Right cardiac atrium (tissue), 5 donors: ENCODE measurements at regions of chr1 and their contacts with region 1.

Region 1: GRCh38 chr1:244272471-244273261 is 179.0 kb downstream of the ADSS2 start:
- DNase-seq: peak; percentile 48 to 78 (median 66)
- ATAC-seq: peak; percentile 84 to 88
- H3K4me3 ChIP-seq: no peak overlapping the region
- H3K27ac ChIP-seq: peak overlapping the region; percentile 12
- H3K4me1 ChIP-seq: no peaks in the 10 kb centered on the region
- H3K27me3 ChIP-seq: no peaks in the 10 kb centered on the region

Region 2: DNA sequence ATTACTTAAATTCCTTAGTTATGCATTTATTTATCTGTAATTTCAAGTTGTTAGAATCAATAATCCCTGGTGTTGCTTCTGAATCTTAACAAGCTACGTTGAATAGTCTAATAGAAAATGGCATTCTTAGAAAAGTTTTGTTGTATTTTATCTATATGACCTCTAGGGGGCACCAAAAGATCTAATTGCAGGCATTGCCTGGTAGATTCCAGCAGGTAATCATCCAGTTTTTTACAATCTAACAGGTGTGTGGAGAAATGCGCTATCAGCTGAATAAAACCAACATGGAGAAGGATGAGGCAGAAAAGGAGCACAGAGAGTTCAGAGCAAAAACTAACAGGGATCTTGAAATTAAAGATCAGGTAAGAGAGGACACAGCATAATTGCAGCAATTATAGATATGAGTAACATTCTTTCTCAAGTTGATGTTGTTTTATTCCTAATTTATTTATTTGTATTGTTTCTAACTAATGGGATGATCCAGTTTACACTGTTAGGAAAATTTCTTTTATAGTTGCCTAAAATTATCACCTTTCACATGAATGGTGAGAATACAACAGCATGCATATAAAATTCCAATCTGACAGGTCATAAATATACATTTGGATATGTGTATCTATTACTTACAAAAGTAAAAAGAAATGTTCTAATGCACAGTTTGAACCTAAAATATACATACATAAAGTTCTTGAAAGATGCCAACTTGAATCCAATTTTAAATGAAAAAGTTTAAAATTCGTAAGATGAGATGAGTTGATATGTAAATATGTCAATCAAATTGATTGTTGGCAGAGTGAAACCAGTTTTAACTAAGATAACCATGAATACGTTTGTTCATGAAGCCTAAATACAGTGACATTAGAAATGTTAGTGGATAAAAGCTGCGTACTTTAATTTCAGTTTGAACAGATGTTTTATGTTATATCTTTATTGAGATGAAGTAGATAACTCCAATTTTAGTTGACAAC is 928.4 kb before region 1 on chr1:
- intact Hi-C with region 1: loop called in 3 of 4 experiments (anchors 5 to 10 kb)
- DNase-seq: no peak
- ATAC-seq: no peak
- H3K4me3 ChIP-seq: no peak overlapping the region
- H3K27ac ChIP-seq: no peak overlapping the region
- H3K4me1 ChIP-seq: no peaks in the 10 kb centered on the region
- H3K27me3 ChIP-seq: no peaks in the 10 kb centered on the region

Region 3: DNA sequence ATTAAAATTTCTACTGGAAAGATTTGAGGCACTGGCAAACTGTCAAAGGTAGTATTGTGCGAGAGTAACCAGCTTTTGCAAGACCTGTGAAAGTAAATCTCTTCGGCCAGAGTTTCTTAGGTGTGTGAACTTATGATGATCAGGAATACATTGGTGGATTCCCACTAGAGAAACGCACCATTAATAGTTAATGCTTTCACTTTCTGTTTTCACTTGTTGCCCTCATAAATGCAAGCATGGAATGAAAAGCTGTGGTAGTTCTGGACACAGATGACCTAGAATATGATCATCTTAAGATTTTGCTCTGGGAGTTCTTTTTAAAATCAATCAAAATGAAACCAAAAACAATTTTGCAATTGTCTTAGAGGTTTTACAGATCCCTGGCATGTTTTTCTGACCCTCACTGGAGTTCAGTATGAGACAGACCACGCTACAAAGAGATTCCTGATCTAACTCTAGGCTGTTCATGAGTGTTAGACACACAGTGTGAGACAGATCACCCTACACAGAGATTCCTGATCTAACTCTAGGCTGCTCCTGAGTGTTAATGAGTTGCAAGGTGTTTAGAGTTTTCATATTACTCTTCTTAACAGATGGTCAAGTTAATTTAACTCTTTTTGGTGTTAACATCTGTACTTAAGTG is 918.0 kb before region 1 on chr1:
- intact Hi-C with region 1: loop called (anchors 5 to 10 kb)
- DNase-seq: no peak
- ATAC-seq: peak; percentile 65 to 68
- H3K4me3 ChIP-seq: peak overlapping the region; percentile 57
- H3K27ac ChIP-seq: no peak overlapping the region
- H3K4me1 ChIP-seq: no peaks in the 10 kb centered on the region
- H3K27me3 ChIP-seq: no peaks in the 10 kb centered on the region